Aorta (tissue), 5 donors: ENCODE measurements at regions of chr9 and their contacts with region 1.

Region 1: GRCh38 chr9:15104826-15105420 is 194.7 kb upstream of the FREM1 start:
- DNase-seq: no peak
- ATAC-seq: no peak
- H3K4me3 ChIP-seq: no peak overlapping the region
- H3K27ac ChIP-seq: no peak overlapping the region
- H3K4me1 ChIP-seq: no peaks in the 10 kb centered on the region
- H3K27me3 ChIP-seq: no peaks in the 10 kb centered on the region

Region 2: DNA sequence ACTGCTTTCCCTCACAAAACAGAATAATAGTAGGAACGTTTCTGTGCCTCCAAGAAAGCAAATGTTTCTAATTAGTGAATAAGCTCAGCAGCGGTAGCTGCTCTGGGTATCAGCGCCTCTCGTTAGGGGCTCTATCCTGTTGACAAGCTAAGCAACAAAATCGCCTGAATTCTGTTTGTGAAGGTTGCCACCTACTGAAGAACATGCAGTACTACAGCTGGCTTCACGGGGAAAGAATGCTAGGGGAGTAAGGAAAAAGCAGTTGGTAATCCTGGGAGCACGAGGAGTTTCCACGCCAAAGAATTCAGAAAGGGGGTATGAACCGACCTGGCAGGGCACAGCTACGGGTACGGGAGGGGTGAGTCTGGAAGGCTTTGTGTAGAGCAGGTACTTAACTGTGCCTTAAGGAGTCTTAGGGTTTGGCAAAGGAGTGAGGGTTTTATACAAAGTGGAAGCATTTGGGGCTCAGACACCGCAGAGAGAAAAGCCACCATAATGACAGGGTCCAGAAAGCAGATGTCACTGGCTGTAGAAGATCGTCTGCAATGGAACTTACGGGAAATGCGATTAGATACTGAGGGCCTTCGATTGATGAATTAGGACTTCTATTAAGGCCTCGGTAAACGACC is 30.4 kb after region 1 on chr9:
- intact Hi-C with region 1: loop called (anchors 2 to 5 kb)
- DNase-seq: no peak
- ATAC-seq: peak; percentile 88
- H3K4me3 ChIP-seq: peak overlapping the region in 1 of 2 donors; percentile 48
- H3K27ac ChIP-seq: no peak overlapping the region
- H3K4me1 ChIP-seq: no peaks in the 10 kb centered on the region
- H3K27me3 ChIP-seq: no peaks in the 10 kb centered on the region

Region 3: GRCh38 chr9:15142878-15143534 is 38.1 kb after region 1 on chr9:
- intact Hi-C with region 1: loop called (anchors 2 to 5 kb)
- DNase-seq: no peak
- ATAC-seq: peak; percentile 82
- H3K4me3 ChIP-seq: no peak overlapping the region
- H3K27ac ChIP-seq: no peak overlapping the region
- H3K4me1 ChIP-seq: no peaks in the 10 kb centered on the region
- H3K27me3 ChIP-seq: no peaks in the 10 kb centered on the region